OCI-LY7 (cell line): ENCODE measurements at regions of chr17 and their contacts with region 1.

Region 1: DNA sequence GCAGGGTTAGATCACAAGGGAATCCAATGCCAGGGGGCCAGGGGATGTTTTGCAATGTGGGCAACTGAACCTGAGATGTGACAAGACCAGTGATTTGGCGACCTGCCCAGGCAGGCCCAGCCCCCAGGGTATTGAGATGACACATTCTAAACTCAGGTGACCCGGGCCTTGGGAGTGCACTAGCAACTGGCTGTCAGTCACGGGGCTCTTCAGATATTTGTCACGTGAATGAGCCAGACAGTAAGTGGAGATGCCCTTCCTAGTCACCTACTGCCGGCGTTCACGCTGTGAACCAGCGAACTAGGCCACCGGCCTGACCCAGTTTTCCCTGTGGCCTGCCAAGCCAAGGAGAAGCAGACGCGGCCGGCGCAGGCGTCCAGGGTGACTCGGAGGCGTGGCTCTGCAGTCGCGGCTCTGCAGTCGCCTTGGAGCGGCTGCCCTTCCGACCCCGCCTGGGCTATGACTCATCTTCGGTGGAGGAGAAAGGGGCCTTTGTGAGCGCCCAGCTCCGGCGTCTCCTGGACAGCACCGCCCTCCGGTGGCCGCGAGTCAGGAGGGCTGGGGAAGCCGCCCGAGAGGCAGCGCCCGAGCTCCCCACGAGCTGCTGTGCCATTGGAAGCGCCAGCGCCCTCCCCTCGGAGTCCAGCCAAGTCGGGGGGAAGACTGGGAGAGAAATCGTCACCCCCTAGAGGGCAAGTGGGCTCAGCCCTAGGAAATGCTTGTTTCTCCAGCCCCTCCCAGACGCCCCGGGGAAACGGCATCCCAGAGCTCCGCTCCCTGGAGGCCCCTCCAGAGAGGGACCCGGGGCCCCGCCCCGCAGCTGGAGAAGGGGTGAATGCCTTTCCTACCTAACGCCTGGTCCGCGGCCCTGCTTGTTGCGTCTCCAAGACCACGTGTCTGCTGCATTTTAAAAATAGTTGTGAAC is 38.8 kb downstream of the WSB1 start:
- DNase-seq: peak; percentile 72
- H3K4me3 ChIP-seq: peak overlapping the region; percentile 59
- H3K27ac ChIP-seq: no peak overlapping the region
- H3K4me1 ChIP-seq: peaks cover 15% of the 10 kb centered on the region
- CTCF ChIP-seq: peak; percentile 77

Region 2: GRCh38 chr17:27236717-27237315 is 95.9 kb before region 1 on chr17:
- CTCF ChIA-PET with region 1: interaction called, 5 read pairs
- POLR2A ChIA-PET with region 1: interaction called, 4 read pairs
- intact Hi-C with region 1: loop called (anchors 1 kb)
- DNase-seq: peak; percentile 72
- H3K4me3 ChIP-seq: no peak overlapping the region
- H3K27ac ChIP-seq: no peak overlapping the region
- H3K4me1 ChIP-seq: peaks cover 6% of the 10 kb centered on the region
- CTCF ChIP-seq: peak; percentile 97

Region 3: GRCh38 chr17:27282054-27282551 is 50.6 kb before region 1 on chr17:
- CTCF ChIA-PET with region 1: no interaction called
- POLR2A ChIA-PET with region 1: no interaction called
- intact Hi-C with region 1: no loop called
- DNase-seq: peak; percentile 21
- H3K4me3 ChIP-seq: no peak overlapping the region
- H3K27ac ChIP-seq: no peak overlapping the region
- H3K4me1 ChIP-seq: peaks cover 16% of the 10 kb centered on the region
- CTCF ChIP-seq: no peak

Region 4: GRCh38 chr17:27303734-27304133 is 29.0 kb before region 1 on chr17:
- CTCF ChIA-PET with region 1: no interaction called
- POLR2A ChIA-PET with region 1: no interaction called
- intact Hi-C with region 1: no loop called
- DNase-seq: no peak
- H3K4me3 ChIP-seq: no peak overlapping the region
- H3K27ac ChIP-seq: no peak overlapping the region
- H3K4me1 ChIP-seq: peaks cover 11% of the 10 kb centered on the region
- CTCF ChIP-seq: no peak